ENCODE measurements at regions of chr15 and their contacts with region 1.

Region 1: GRCh38 chr15:33700695-33701304 is 267.5 kb upstream of the CHRM5 start:
- DNase-seq: peak; percentile 90

Region 2: DNA sequence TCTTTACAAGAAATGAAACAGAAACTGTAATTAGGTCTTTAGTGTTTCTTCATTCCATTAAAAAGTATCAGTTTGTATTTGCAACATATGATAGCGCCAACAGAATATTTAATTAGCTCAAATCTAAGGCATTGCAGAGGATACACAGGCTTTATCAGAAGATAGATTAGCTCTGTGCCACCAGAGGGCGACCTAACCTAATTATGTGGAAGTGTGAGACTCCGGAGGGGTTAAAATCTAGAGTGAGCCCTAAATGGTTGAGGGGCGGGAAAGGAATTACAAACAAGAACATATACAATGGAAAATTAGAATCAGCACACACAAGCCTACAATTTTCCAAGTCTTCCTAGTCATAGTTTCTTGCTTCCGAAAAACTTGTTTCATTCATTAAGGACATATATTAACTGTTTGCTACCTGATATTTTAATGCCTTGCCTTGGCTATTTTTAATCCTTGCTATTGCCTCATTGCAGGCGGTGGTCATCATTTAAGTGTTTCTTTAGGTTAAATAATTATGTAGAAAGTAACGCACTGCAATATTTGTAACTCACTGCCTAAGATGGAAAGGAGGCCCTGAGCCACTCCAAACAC is 408.0 kb before region 1 on chr15:
- intact Hi-C with region 1: loop called in 1 of 2 experiments (anchors 10 kb)
- DNase-seq: no peak

Region 3: DNA sequence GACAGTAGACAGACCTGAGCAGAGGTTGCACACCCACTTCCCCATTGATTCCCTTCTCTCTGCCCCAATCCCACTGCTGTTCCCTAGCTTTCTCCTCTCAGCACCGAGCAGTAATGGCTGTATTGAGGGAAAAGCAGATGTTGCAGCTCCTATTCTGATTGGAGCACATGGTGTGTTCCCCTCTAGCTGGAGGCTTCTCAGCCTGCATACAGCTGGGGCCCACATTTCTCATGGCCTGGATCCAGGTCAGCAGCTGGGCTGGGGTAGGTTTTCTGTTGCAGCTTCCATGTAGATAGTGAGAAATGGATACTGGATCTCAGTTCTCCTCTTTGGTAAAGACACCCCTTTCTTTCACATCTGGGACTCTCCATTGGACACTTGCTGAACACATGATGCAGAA is 339.9 kb before region 1 on chr15:
- intact Hi-C with region 1: no loop called
- DNase-seq: no peak